Activated CD4-positive, alpha-beta T cell treated with anti-CD3 and anti-CD28 coated beads for 36 hours (primary cell): ENCODE measurements at regions of chrX and their contacts with region 1.

Region 1: DNA sequence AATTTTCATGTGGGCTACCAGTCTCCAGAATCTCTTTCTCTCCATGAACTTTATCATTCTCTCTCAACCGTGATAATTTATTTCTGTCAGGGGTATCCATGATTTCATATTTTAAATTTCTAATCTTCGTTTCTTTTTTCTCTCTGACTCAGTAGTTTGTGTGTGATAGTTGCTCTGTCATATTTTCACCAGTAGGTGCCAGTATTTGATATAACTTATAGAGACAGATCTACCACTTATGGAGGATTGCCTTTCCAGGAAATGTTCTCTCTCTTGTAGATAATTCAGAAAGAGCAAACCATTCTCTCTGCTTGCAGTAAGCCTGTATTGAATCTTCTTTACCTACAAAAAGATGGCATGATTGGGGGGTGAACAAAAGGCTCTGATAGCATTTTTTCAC is 79.3 kb upstream of the DYNLT3 start:
- DNase-seq: no peak
- ATAC-seq: peak; percentile 39
- H3K4me3 Mint-ChIP-seq: no peak overlapping the region
- H3K27ac Mint-ChIP-seq: no peak overlapping the region
- H3K4me1 Mint-ChIP-seq: no peaks in the 10 kb centered on the region
- H3K27me3 Mint-ChIP-seq: peaks cover 4% of the 10 kb centered on the region

Region 2: GRCh38 chrX:37677765-37678164 is 248.9 kb before region 1 on chrX:
- CTCF ChIA-PET with region 1: no interaction called
- POLR2A ChIA-PET with region 1: no interaction called
- intact Hi-C with region 1: no loop called
- DNase-seq: no peak
- ATAC-seq: peak; percentile 26
- H3K4me3 Mint-ChIP-seq: no peak overlapping the region
- H3K27ac Mint-ChIP-seq: no peak overlapping the region
- H3K4me1 Mint-ChIP-seq: no peaks in the 10 kb centered on the region
- H3K27me3 Mint-ChIP-seq: no peaks in the 10 kb centered on the region

Region 3: DNA sequence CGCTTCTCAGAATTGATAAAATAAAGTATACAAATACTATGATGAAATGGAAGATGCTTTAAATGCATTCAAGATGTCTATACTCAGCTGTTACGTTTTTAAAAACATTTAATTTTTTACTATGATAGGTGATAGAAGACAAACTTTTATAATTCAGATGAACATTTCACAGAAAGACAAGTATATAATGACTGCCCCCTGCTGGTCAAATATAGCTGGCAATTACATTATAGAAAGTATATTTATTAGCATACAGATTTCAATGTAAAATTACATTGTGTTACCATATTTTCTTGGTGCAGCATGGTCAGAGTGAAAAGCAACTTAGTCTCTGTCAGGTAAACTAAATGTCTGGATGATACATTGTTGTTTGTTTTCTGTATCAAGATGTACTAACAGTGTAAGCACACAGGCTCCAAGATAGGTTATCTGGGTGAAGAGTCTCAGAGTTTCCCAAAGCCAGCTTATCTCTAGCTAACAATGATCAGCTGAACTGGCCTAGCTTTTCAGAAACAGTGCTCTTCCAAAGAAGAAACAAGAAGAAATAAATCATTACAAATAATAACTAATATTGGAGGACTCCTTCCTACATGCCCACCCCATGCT is 239.9 kb after region 1 on chrX:
- CTCF ChIA-PET with region 1: interaction called, 15 read pairs
- POLR2A ChIA-PET with region 1: no interaction called
- intact Hi-C with region 1: loop called (anchors 1 kb)
- DNase-seq: peak; percentile 18
- ATAC-seq: no peak
- H3K4me3 Mint-ChIP-seq: no peak overlapping the region
- H3K27ac Mint-ChIP-seq: no peak overlapping the region
- H3K4me1 Mint-ChIP-seq: no peaks in the 10 kb centered on the region
- H3K27me3 Mint-ChIP-seq: peaks cover 2% of the 10 kb centered on the region